HCT116 (cell line): ENCODE measurements at regions of chr7 and their contacts with region 1.

Region 1: DNA sequence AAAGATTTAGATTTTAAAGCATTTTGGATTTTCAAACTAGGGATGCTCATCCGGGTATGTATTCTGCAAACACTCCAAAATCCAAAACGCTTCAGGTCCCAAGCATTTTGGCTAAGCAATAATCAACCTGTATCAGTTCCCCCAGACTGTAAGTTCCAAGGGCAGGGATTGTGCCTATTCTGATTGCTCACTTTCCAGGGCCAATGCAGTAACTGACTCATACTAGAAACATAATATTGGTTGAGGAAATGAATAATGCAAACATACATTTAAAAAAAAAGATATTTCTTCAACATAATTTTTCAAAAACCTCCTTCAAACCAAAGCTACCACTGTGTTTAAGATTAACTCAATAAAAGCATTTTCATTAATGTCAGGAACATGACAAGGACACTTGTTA is 69.5 kb downstream of the HIBADH start:
- DNase-seq: no peak
- ATAC-seq: no peak
- H3K4me3 ChIP-seq: no peak overlapping the region
- H3K27ac ChIP-seq: no peak overlapping the region
- H3K4me1 ChIP-seq: no peaks in the 10 kb centered on the region
- H3K27me3 ChIP-seq: no peaks in the 10 kb centered on the region
- CTCF ChIP-seq: no peak
- POLR2A ChIP-seq: no peak
- RAD21 ChIP-seq: no peak

Region 2: GRCh38 chr7:27605689-27606269 is 12.6 kb after region 1 on chr7:
- CTCF ChIA-PET with region 1: interaction called, 10 read pairs
- POLR2A ChIA-PET with region 1: no interaction called
- RAD21 ChIA-PET with region 1: no interaction called
- intact Hi-C with region 1: no loop called
- DNase-seq: no peak
- ATAC-seq: no peak
- H3K4me3 ChIP-seq: no peak overlapping the region
- H3K27ac ChIP-seq: no peak overlapping the region
- H3K4me1 ChIP-seq: 0 out of 4 replicates have a peak, but pooled peaks cover 0 to 3% of the 10 kb centered on the region in 2 experiments
- H3K27me3 ChIP-seq: no peaks in the 10 kb centered on the region
- CTCF ChIP-seq: peak; percentile 40 to 51 (median 48); a peak in 4 of 6 replicates
- POLR2A ChIP-seq: no peak
- RAD21 ChIP-seq: peak; percentile 48

Region 3: GRCh38 chr7:27663989-27664668 is 70.9 kb after region 1 on chr7:
- CTCF ChIA-PET with region 1: no interaction called
- POLR2A ChIA-PET with region 1: no interaction called
- RAD21 ChIA-PET with region 1: no interaction called
- intact Hi-C with region 1: no loop called
- DNase-seq: no peak
- ATAC-seq: no peak
- H3K4me3 ChIP-seq: peak overlapping the region; percentile 44 to 87; a peak in 3 of 4 replicates
- H3K27ac ChIP-seq: peak overlapping the region; percentile 55; the same call in 1 of the 2 replicates
- H3K4me1 ChIP-seq: peaks cover 14 to 22% of the 10 kb centered on the region in 2 experiments
- H3K27me3 ChIP-seq: no peaks in the 10 kb centered on the region
- CTCF ChIP-seq: no peak
- POLR2A ChIP-seq: no peak
- RAD21 ChIP-seq: no peak

Region 4: GRCh38 chr7:28551331-28551730 is 958.1 kb after region 1 on chr7:
- CTCF ChIA-PET with region 1: no interaction called
- POLR2A ChIA-PET with region 1: no interaction called
- RAD21 ChIA-PET with region 1: no interaction called
- intact Hi-C with region 1: no loop called
- DNase-seq: no peak
- ATAC-seq: no peak
- H3K4me3 ChIP-seq: no peak overlapping the region
- H3K27ac ChIP-seq: no peak overlapping the region
- H3K4me1 ChIP-seq: no peaks in the 10 kb centered on the region
- H3K27me3 ChIP-seq: peaks cover 77% of the 10 kb centered on the region
- CTCF ChIP-seq: no peak
- POLR2A ChIP-seq: no peak
- RAD21 ChIP-seq: no peak